CD4-positive, alpha-beta memory T cell (primary cell): ENCODE measurements at regions of chr11 and their contacts with region 1.

Region 1: GRCh38 chr11:42329929-42330565 is 870.6 kb upstream of the LRRC4C start:
- DNase-seq: no peak
- H3K4me3 ChIP-seq: no peak overlapping the region
- H3K4me3 Mint-ChIP-seq: no peak overlapping the region
- H3K27ac ChIP-seq: no peak overlapping the region
- H3K27ac Mint-ChIP-seq: no peak overlapping the region
- H3K4me1 ChIP-seq: no peaks in the 10 kb centered on the region
- H3K4me1 Mint-ChIP-seq: no peaks in the 10 kb centered on the region
- H3K27me3 ChIP-seq: no peaks in the 10 kb centered on the region
- H3K27me3 Mint-ChIP-seq: no peaks in the 10 kb centered on the region

Region 2: GRCh38 chr11:42345942-42346341 is 15.9 kb after region 1 on chr11:
- CTCF ChIA-PET with region 1: no interaction called
- POLR2A ChIA-PET with region 1: no interaction called
- intact Hi-C with region 1: loop called (anchors 2 kb)
- DNase-seq: no peak
- H3K4me3 ChIP-seq: no peak overlapping the region
- H3K4me3 Mint-ChIP-seq: no peak overlapping the region
- H3K27ac ChIP-seq: no peak overlapping the region
- H3K27ac Mint-ChIP-seq: no peak overlapping the region
- H3K4me1 ChIP-seq: no peaks in the 10 kb centered on the region
- H3K4me1 Mint-ChIP-seq: no peaks in the 10 kb centered on the region
- H3K27me3 ChIP-seq: no peaks in the 10 kb centered on the region
- H3K27me3 Mint-ChIP-seq: no peaks in the 10 kb centered on the region